A549 (cell line): ENCODE measurements at regions of chr1 and their contacts with region 1.

Region 1: DNA sequence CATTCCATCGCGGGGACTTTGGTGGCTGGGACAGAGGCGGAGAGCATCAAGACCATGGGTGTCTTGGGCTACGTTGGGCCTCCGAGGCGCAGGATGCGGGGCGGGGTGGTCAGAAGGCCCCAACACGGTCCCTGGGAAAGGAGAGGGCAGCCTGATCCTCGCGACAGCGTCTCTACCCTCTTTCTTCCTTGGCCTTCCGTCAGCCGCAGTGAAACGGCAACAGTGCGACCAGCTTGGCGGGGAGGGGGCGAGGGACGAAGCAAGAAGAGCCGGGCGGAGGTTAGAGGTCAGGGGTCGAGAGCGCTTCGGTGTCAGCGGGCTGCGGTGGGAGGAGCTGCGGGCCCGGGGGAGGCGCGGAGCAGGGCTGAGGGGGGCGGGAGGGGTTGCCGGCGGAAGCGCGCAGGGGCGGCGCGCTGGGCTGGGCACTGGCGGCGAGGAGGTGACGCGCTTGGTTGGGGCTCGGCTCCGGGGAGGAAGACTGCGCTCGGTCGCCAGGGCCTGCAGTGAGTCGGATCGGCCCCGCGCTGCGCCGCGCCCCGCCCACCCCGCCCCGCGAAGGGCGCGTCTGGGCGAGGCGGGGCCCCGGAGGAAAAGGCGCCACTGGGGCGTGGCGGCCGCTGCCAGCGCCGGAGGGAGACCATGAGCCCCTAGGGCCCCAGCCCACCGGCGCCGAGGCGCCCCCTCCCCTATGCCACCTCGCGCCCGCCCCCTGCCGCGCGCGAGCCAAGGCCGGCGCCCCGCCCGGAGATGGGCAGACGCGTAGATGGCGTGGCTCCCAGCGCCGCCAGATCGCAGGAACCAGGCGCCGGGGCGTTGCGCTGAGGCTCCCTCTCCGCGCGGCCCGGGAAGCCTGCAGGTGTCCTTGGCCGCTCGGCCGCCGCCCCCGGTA is at the start of gene KCNC4:
- DNase-seq: peak; percentile 58 to 81
- ATAC-seq: peak; percentile 84 to 91
- H3K4me3 ChIP-seq: peak within 1 kb of the TSS; percentile 77
- H3K27ac ChIP-seq: peak within 1 kb of the TSS; percentile 83 to 94
- H3K4me1 ChIP-seq: peaks cover 4% of the 10 kb centered on the region; the same call in 2 of the 3 replicates
- CTCF ChIP-seq: no peak
- EP300 ChIP-seq: no peak
- POLR2A ChIP-seq: no peak
- RAD21 ChIP-seq: no peak
- polyA plus RNA-seq, gene KCNC4: 1.1 and 1.8 TPM in 2 replicates

Region 2: DNA sequence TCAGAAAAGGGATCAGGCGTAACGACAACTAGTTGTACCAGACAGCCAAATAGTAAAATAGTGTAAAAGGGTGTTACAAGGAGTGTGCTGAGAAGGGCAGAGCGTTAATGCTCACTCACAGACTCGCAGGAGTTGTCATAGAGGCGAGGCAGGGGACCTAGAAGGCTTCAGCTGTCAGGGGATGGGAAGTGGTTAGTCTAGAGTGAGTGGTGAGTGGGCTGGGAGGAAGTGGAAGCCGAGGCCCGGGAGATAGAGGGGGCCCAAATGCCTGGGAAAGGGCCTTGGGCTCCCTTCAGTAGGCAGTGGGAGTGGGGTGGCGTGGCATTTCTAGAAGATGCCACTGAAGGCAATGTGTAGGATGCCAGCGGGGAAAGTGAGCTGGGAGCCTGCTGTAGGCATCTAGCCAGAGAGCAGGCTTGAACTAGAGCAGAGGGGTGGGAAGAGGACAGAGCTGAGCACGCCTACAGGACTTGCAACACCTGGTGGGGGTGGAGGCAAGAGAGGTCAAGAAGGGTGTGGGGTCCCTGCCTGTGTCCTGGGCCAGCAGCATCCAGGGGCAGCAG is 49.3 kb before region 1 on chr1:
- CTCF ChIA-PET with region 1: no interaction called
- POLR2A ChIA-PET with region 1: no interaction called
- DNase-seq: no peak
- ATAC-seq: no peak
- H3K4me3 ChIP-seq: no peak overlapping the region
- H3K27ac ChIP-seq: no peak overlapping the region
- H3K4me1 ChIP-seq: no peaks in the 10 kb centered on the region
- CTCF ChIP-seq: no peak
- EP300 ChIP-seq: no peak
- POLR2A ChIP-seq: no peak
- RAD21 ChIP-seq: no peak

Region 3: DNA sequence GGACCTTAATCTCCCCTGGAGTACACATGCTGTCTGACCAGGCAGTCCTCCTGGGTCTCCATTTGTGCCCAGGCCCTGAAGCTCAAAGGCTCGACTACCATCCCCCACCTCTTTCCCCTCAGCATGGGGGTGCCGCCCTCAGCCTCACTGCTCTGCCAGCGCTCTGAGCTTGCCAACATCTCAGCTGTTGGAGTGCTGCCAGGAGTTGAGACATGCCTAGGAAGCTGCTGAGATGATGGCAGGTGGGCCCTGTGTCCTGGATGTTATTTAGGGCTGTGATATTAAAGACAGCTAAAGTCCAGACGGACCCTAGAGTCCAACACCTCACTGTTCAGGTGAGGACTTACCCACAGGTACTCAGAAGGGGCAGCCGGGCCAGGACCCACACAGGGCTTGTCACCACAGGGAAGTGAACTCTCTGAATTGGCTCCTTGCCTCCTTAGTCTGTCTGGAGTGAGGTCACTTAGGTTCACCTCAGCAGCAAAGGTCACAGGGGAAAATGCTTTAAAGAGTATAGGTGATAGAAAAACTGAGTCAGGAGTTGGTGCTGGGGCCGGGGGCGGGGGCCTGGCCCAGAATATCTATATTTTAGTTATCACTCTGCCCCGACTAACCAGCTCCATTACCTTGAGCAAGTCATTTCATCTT is 19.6 kb before region 1 on chr1:
- CTCF ChIA-PET with region 1: interaction called, 40 read pairs
- POLR2A ChIA-PET with region 1: no interaction called
- DNase-seq: no peak
- ATAC-seq: no peak
- H3K4me3 ChIP-seq: no peak overlapping the region
- H3K27ac ChIP-seq: no peak overlapping the region
- H3K4me1 ChIP-seq: no peaks in the 10 kb centered on the region
- CTCF ChIP-seq: no peak
- EP300 ChIP-seq: no peak
- POLR2A ChIP-seq: no peak
- RAD21 ChIP-seq: no peak

Region 4: GRCh38 chr1:110229348-110230001 is 19.5 kb after region 1 on chr1:
- CTCF ChIA-PET with region 1: interaction called, 19 read pairs
- POLR2A ChIA-PET with region 1: no interaction called
- DNase-seq: no peak
- ATAC-seq: no peak
- H3K4me3 ChIP-seq: no peak overlapping the region
- H3K27ac ChIP-seq: no peak overlapping the region
- H3K4me1 ChIP-seq: peaks cover 5% of the 10 kb centered on the region; the same call in 2 of the 3 replicates
- CTCF ChIP-seq: no peak
- EP300 ChIP-seq: no peak
- POLR2A ChIP-seq: no peak
- RAD21 ChIP-seq: no peak

Region 5: GRCh38 chr1:110292031-110292741 is 82.2 kb after region 1 on chr1:
- CTCF ChIA-PET with region 1: interaction called, 19 read pairs
- POLR2A ChIA-PET with region 1: no interaction called
- DNase-seq: peak; percentile 5 to 18
- ATAC-seq: peak; percentile 84 to 85
- H3K4me3 ChIP-seq: no peak overlapping the region
- H3K27ac ChIP-seq: peak overlapping the region; percentile 49 to 59; a peak in 3 of 6 replicates
- H3K4me1 ChIP-seq: peaks cover 25% of the 10 kb centered on the region
- CTCF ChIP-seq: no peak
- EP300 ChIP-seq: no peak
- POLR2A ChIP-seq: no peak
- RAD21 ChIP-seq: no peak

Region 6: GRCh38 chr1:110312188-110313121 is 102.5 kb after region 1 on chr1:
- CTCF ChIA-PET with region 1: interaction called, 354 read pairs
- POLR2A ChIA-PET with region 1: no interaction called
- DNase-seq: peak; percentile 42 to 69
- ATAC-seq: peak; percentile 97 to 100
- H3K4me3 ChIP-seq: no peak overlapping the region
- H3K27ac ChIP-seq: no peak overlapping the region
- H3K4me1 ChIP-seq: no peaks in the 10 kb centered on the region
- CTCF ChIP-seq: peak; percentile 82
- EP300 ChIP-seq: no peak
- POLR2A ChIP-seq: no peak
- RAD21 ChIP-seq: peak; percentile 95

Region 7: GRCh38 chr1:110338886-110339406 is 129.0 kb after region 1 on chr1 and contains the start of gene RBM15:
- CTCF ChIA-PET with region 1: interaction called, 36 read pairs
- POLR2A ChIA-PET with region 1: interaction called, 14 read pairs
- DNase-seq: peak; percentile 89 to 100
- ATAC-seq: peak; percentile 75 to 87
- H3K4me3 ChIP-seq: peak within 1 kb of the TSS; percentile 91
- H3K27ac ChIP-seq: peak within 1 kb of the TSS; percentile 96 to 99
- H3K4me1 ChIP-seq: peaks cover 58% of the 10 kb centered on the region
- CTCF ChIP-seq: no peak
- EP300 ChIP-seq: no peak
- POLR2A ChIP-seq: no peak
- RAD21 ChIP-seq: no peak
- polyA plus RNA-seq, gene RBM15: 14.0 and 15.0 TPM in 2 replicates

Region 8: GRCh38 chr1:110460253-110461220 is 250.6 kb after region 1 on chr1:
- CTCF ChIA-PET with region 1: interaction called, 338 read pairs
- POLR2A ChIA-PET with region 1: no interaction called
- DNase-seq: peak; percentile 55 to 67
- ATAC-seq: peak; percentile 60 to 83
- H3K4me3 ChIP-seq: no peak overlapping the region
- H3K27ac ChIP-seq: no peak overlapping the region
- H3K4me1 ChIP-seq: peaks cover 27% of the 10 kb centered on the region
- CTCF ChIP-seq: peak; percentile 90
- EP300 ChIP-seq: no peak
- POLR2A ChIP-seq: no peak
- RAD21 ChIP-seq: peak; percentile 94 to 97

Region 9: DNA sequence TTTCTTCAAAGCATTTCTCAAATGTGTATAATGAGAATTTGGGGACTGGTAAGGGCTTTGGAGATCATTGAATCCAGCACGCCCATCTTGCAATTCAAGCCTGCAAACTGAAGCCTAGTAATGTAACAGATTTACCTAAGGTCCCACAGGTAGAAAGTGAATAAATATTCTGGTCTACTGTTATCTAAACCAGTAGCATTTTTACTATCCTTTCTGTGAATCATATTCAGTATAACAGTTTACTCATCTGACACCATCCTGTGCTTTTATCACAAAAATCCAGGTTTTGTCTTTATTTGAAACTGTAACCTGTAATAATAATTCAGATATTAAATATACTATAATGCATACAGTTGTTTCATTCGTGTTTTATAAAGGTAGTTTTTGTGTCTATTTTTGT is 447.4 kb after region 1 on chr1:
- CTCF ChIA-PET with region 1: no interaction called
- POLR2A ChIA-PET with region 1: no interaction called
- DNase-seq: no peak
- ATAC-seq: no peak
- H3K4me3 ChIP-seq: no peak overlapping the region
- H3K27ac ChIP-seq: no peak overlapping the region
- H3K4me1 ChIP-seq: no peaks in the 10 kb centered on the region
- CTCF ChIP-seq: no peak
- EP300 ChIP-seq: no peak
- POLR2A ChIP-seq: no peak
- RAD21 ChIP-seq: no peak